ENCODE measurements at regions of chr2 and their contacts with region 1.

Region 1: DNA sequence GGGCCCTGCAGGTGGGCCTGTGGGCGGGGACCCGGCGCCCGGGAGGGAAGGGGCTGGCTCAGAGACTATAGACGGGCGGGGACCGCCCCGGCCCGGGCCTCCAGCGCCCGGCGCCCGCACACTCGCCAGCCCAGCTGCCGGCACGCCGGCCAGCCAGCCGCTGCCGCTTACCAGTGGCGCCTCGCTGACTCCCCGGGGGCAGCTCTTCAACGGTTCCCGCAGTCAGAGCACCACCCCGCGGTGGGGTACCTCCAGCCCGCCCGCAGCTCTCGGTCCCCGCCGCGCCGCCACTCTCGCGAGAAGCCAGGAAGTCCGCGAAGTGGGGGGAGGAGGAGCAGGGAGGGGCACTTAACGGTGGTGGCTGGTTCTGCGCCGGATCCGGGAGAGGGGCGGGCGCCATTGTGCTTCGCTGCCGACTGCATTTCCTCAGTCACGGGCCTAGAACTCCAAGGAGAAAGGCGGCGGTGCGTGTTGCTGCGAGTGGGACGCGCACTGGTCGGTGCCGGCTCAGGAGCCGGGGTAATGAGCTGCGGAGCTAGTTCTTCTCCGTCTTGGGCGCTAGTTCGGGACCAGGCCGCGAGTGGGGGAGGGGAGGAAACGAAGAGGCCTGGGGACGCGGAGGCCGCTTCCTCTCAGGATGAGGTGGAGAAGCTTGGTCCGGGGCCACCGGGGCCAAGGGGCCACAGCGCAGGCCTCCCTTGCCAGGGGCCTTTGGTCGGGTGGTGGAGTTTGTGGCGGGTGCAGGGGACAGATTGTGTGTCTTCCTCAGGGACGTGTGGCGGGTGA is at the start of gene MARCHF7:
- DNase-seq: peak; percentile 79
- ATAC-seq: peak; percentile 92
- H3K4me3 ChIP-seq: peak within 1 kb of the TSS; percentile 99
- H3K27ac ChIP-seq: peak within 1 kb of the TSS; percentile 99
- H3K4me1 ChIP-seq: peaks cover 3% of the 10 kb centered on the region; the same call in 1 of the 2 replicates
- H3K27me3 ChIP-seq: no peaks in the 10 kb centered on the region
- CTCF ChIP-seq: peak; percentile 57 to 74 (median 63)
- EP300 ChIP-seq: 0 out of 4 replicates have a peak, but pooled peaks of 1 of the 2 experiments have one; percentile 11
- POLR2A ChIP-seq: peak; percentile 99
- RAD21 ChIP-seq: peak; percentile 63
- polyA plus RNA-seq, gene MARCHF7: 39.4 to 56.3 TPM

Region 2: DNA sequence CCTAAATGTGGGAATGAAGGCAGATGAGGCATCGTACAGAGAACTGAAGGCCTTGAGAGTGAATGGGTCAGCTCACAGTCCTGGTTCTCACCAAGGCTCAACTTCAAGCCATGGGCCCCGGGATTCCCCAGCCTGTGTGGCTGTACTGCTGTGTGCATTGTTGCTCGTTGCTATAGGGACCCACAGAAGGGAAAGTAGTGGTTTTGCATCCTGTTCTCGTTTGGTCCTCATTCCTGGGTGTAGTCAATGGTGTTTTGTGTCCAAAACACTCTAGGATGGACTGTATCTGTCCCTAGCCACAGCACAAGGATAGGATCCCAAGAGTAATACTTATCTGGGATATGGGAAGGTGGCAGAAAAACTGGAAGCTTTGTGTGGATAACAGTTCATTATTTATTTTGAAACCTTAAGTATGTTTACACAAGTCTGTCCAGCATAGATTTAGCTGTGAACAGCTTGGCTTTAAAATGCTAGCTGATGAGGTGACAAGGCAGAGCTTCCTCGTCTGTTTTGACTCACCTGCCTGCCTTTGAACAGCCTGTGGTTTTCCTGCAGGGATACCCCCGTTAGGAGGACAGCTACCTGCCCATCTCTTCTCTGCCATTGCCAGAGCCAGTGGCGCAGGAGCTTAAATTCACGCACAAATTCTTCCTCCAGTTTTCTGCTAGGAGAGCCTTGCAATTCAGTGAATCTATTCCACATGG is 510.8 kb before region 1 on chr2:
- CTCF ChIA-PET with region 1: no interaction called
- POLR2A ChIA-PET with region 1: no interaction called
- RAD21 ChIA-PET with region 1: no interaction called
- SMC1A ChIA-PET with region 1: no interaction called
- in situ Hi-C with region 1: no loop called
- intact Hi-C with region 1: loop called (anchors 10 kb)
- DNase-seq: peak; percentile 42
- ATAC-seq: peak; percentile 98
- H3K4me3 ChIP-seq: no peak overlapping the region
- H3K27ac ChIP-seq: peak overlapping the region; percentile 16; the same call in 1 of the 2 replicates
- H3K4me1 ChIP-seq: peaks cover 13% of the 10 kb centered on the region
- H3K27me3 ChIP-seq: no peaks in the 10 kb centered on the region
- CTCF ChIP-seq: no peak
- EP300 ChIP-seq: peak in 1 of 2 experiments; percentile 71; a peak in 2 of 4 replicates
- POLR2A ChIP-seq: no peak
- RAD21 ChIP-seq: no peak

Region 3: DNA sequence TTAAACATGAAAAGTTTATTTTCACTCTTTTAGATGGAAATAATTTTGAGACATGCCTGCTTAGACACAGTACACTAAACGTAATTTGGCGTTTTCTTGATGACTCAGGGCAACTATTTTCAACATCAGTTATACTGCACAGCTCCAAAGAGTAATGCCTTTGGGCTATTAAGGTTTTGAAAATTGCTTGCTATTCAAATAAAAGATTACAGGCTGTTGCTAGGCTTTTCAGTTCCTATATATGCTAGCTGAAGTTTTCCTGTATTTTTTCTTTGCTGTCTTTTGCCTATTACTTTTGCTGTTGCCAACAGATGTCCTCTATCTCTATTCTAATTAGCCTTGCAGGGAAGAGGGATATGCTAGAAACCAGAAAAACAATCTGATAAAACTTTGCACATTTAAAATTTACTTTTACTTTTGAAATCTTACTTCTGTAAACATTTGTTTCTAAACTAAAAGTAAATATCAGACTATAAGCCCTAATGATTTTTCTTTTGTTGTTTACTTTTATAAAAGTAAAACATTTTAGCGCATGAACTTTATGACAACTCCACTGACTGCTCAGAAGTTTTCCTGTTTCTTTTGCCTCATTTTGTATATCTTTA is 312.4 kb before region 1 on chr2:
- CTCF ChIA-PET with region 1: no interaction called
- POLR2A ChIA-PET with region 1: no interaction called
- RAD21 ChIA-PET with region 1: no interaction called
- SMC1A ChIA-PET with region 1: no interaction called
- in situ Hi-C with region 1: no loop called
- intact Hi-C with region 1: loop called (anchors 10 kb)
- DNase-seq: no peak
- ATAC-seq: no peak
- H3K4me3 ChIP-seq: no peak overlapping the region
- H3K27ac ChIP-seq: no peak overlapping the region
- H3K4me1 ChIP-seq: no peaks in the 10 kb centered on the region
- H3K27me3 ChIP-seq: no peaks in the 10 kb centered on the region
- CTCF ChIP-seq: no peak
- EP300 ChIP-seq: no peak
- POLR2A ChIP-seq: no peak
- RAD21 ChIP-seq: no peak

Region 4: DNA sequence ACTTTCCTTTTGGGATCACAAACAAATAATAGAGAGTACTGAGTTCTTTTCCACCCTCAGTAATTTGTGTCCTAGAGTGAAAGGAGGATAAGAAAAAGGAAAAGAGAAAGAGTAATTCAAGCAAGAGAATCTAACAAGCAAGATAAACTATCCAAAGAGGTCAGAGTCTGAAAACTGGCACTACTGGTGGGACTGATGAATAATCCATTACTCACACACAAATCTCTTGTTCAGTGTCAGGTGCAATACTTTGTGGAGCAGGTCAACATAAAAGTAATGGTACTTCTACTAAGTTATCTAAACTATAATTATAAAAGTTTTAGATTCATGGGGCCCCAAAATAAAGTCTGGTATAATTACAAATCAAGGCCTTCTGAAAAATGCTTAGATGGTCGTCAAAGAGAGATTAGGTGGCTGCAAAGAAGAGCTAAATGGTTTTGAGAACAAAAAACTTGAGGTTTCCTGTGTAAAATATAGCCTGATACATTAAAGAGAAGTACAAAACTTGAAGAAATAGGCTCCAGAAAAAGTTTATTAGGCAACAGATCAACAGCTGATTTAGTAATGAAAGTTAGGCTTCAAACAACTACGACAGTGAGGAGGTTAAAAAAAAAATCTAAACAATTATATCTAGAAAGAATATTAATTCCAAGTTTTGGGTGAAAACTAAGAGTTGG is 205.4 kb before region 1 on chr2:
- CTCF ChIA-PET with region 1: no interaction called
- POLR2A ChIA-PET with region 1: no interaction called
- RAD21 ChIA-PET with region 1: no interaction called
- SMC1A ChIA-PET with region 1: no interaction called
- in situ Hi-C with region 1: no loop called
- intact Hi-C with region 1: no loop called
- DNase-seq: no peak
- ATAC-seq: peak; percentile 30; the same call in 1 of the 3 replicates
- H3K4me3 ChIP-seq: no peak overlapping the region
- H3K27ac ChIP-seq: no peak overlapping the region
- H3K4me1 ChIP-seq: no peaks in the 10 kb centered on the region
- H3K27me3 ChIP-seq: no peaks in the 10 kb centered on the region
- CTCF ChIP-seq: no peak
- EP300 ChIP-seq: no peak
- POLR2A ChIP-seq: no peak
- RAD21 ChIP-seq: no peak

Region 5: DNA sequence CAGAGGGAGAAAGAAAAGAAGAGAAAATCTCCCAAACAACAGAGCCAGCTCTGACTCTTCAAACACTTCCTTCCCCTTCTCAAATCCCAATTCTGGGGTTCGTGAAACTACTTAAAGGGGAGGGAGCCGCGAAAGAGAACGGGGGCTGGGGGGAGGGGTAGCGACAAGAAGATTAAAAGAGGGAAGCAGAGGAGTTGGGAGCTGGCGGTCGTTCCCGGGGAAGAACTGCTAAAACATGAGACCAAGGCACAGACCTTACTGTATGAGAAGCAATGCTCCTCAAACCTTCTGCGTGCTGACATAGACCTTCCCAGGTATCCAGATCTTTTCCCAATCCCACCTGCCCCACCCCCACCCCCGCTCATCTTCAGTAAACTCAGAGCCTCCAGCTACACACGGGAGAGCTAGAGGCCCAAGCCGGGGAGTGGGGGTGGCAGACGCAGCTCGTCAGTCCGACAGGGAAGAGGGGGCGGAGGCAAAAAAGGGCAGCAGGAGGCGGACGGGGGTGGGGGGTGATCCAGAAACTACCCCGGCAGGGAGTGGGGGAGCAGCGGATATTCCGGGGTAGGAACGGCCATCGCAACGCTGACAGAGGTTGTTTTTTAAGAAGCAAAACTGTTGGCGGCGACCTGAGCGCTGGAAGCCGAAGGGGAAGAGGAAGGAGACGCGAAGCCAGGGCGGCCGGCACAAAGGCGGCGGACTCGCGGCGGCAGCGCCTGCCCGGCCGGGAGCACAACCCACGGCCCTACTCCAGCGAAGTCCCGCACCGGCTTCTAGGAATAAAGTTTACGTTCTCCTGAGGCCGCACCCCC is 97.0 kb before region 1 on chr2:
- CTCF ChIA-PET with region 1: interaction called, 7 read pairs
- POLR2A ChIA-PET with region 1: interaction called, 5 read pairs
- RAD21 ChIA-PET with region 1: interaction called, 7 read pairs
- SMC1A ChIA-PET with region 1: interaction called, 3 read pairs
- in situ Hi-C with region 1: no loop called
- intact Hi-C with region 1: loop called (anchors 1 kb)
- DNase-seq: peak; percentile 46
- ATAC-seq: peak; percentile 85
- H3K4me3 ChIP-seq: peak overlapping the region; percentile 70
- H3K27ac ChIP-seq: peak overlapping the region; percentile 73
- H3K4me1 ChIP-seq: no peaks in the 10 kb centered on the region; the same call in 1 of the 2 replicates
- H3K27me3 ChIP-seq: no peaks in the 10 kb centered on the region
- CTCF ChIP-seq: no peak
- EP300 ChIP-seq: no peak
- POLR2A ChIP-seq: peak; percentile 78
- RAD21 ChIP-seq: peak; percentile 25; the same call in 1 of the 2 replicates

Region 6: DNA sequence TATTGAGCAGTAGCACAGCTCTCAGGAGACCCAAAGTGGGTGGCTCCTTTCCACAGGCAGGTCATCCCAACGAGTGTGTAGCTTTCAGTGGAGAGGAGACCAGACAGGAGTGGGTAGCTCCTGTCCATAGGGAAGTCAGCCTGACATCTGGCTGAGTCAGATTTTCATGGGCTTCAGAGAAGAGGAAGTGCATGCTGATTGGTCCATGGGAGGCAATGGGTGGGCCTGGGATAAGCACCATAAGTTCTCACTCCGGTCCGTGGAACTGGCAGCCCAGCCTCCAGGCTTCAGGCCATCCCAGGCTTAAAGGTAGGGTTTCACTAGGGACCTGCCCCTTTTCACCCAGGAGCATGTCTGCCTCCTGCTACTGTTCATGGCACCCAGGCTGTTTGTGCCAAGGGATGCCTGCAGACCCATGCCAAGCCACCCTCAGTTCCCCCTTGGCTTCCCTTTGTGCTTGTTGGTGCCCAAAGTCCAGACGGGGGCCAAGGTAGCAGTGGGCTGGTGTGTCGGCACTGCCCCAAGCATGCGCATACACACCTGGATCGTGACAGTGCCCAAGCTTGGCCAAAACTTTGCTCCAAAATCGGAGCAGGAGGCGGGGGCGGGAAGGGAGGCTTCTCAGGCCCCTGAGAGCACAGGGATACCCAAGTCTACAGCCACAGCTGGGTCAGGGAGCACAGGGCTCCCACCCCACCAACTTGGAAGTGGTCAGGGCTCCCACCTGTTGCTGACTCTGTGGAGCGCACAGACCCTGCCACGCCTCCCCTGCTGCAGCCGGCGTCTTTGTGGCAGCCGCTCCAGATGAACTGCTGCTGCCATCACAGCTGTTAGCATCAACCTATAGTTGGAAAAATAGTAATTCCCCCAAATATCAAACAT is 26.4 kb after region 1 on chr2:
- CTCF ChIA-PET with region 1: interaction called, 10 read pairs
- POLR2A ChIA-PET with region 1: interaction called, 5 read pairs
- RAD21 ChIA-PET with region 1: interaction called, 3 read pairs
- SMC1A ChIA-PET with region 1: interaction called, 84 read pairs
- in situ Hi-C with region 1: no loop called
- intact Hi-C with region 1: no loop called
- DNase-seq: no peak
- ATAC-seq: peak; percentile 40
- H3K4me3 ChIP-seq: no peak overlapping the region
- H3K27ac ChIP-seq: no peak overlapping the region
- H3K4me1 ChIP-seq: no peaks in the 10 kb centered on the region
- H3K27me3 ChIP-seq: no peaks in the 10 kb centered on the region
- CTCF ChIP-seq: no peak
- EP300 ChIP-seq: no peak
- POLR2A ChIP-seq: peak; percentile 61
- RAD21 ChIP-seq: no peak

Region 7: DNA sequence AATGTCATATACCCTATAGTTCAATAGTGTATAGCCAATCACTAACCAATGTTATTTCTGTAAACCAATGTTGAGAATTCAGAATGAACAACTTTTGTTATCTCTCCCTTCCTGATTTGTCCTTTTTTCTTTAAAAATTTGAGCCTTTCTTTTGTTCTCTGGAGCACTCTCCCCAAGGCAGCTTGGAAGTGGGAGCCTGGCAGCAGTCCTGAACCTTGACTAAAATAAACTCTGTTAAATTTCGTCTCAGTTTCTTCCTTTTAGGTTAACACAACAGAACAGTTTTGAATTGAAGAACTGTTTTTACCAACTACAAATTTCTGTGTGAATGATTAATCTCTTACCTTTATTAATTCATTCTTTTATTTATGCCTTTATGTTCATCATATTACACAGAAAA is 49.7 kb after region 1 on chr2:
- CTCF ChIA-PET with region 1: no interaction called
- POLR2A ChIA-PET with region 1: no interaction called
- RAD21 ChIA-PET with region 1: no interaction called
- SMC1A ChIA-PET with region 1: interaction called, 10 read pairs
- in situ Hi-C with region 1: no loop called
- intact Hi-C with region 1: no loop called
- DNase-seq: no peak
- ATAC-seq: no peak
- H3K4me3 ChIP-seq: no peak overlapping the region
- H3K27ac ChIP-seq: no peak overlapping the region
- H3K4me1 ChIP-seq: no peaks in the 10 kb centered on the region
- H3K27me3 ChIP-seq: no peaks in the 10 kb centered on the region
- CTCF ChIP-seq: no peak
- EP300 ChIP-seq: no peak
- POLR2A ChIP-seq: no peak
- RAD21 ChIP-seq: no peak

Measured in GM12878 (cell line).